Heart right ventricle (tissue), 16 donors: ENCODE measurements at regions of chr6 and their contacts with region 1.

Region 1: DNA sequence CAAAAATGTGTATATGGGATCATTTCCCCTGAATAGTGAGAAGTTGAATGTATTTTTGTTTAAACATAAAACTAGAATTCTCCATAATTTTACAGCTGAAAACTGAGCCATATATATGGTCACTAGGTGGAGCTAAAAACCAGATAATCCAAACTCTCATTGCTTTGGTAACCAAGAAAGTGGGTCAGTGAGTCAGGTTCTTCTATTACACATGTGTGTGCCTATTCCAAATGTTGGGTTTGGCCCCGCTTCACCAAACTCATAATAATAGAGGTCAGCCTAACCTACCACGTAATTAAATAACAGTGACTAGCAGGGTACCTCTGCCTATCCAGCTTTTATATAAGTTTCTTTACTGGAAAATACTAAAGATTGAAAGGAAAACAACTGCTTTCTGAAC is 19.3 kb upstream of the RNGTT start:
- DNase-seq: peak in 1 of 2 donors; percentile 35
- ATAC-seq: peak; percentile 88 to 97 (median 93)
- H3K4me3 ChIP-seq: no peak overlapping the region
- H3K27ac ChIP-seq: no peak overlapping the region
- H3K4me1 ChIP-seq: peaks cover 0 to 12% (median 6%) of the 10 kb centered on the region in 9 donors
- H3K27me3 ChIP-seq: no peaks in the 10 kb centered on the region
- CTCF ChIP-seq: peak; percentile 51 to 87 (median 77)

Region 2: DNA sequence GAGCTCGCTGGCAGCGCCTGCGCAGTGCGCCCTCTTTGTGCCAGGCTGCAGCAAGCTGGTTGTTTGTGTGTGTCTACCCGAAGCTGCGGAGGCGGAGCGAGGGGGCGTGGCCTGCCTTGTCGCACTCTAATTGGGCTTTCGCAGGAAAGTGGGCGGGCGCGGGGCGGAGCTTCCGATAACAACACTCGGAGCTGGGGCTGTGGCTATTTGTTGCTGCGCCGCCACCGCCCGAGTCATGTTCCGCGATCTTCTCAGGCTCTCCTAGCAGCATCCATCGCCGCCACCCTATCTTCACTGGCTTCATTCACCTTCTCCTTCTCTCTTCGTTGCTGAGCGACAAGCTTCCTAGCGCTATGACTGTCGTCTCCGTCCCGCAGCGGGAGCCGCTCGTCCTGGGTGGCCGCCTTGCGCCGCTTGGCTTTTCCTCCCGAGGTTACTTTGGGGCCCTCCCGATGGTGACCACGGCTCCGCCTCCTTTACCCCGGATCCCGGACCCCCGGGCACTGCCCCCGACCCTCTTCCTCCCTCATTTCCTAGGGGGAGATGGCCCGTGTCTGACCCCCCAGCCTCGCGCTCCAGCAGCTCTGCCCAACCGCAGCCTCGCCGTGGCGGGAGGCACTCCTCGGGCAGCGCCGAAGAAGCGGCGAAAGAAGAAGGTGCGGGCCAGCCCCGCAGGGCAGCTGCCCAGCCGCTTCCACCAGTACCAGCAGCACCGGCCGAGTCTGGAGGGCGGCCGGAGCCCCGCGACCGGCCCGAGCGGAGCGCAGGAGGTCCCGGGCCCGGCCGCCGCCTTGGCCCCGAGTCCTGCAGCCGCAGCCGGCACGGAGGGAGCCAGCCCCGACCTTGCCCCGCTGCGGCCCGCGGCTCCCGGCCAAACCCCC is 98.1 kb after region 1 on chr6 and contains the start of gene PNRC1:
- intact Hi-C with region 1: loop called in 7 of 10 experiments (anchors 1 to 10 kb)
- DNase-seq: peak; percentile 100
- ATAC-seq: peak; percentile 88 to 95 (median 92)
- H3K4me3 ChIP-seq: peak within 1 kb of the TSS; percentile 79 to 99 (median 97)
- H3K27ac ChIP-seq: peak within 1 kb of the TSS; percentile 99 to 100 (median 100)
- H3K4me1 ChIP-seq: peaks cover 3 to 41% (median 31%) of the 10 kb centered on the region in 9 donors
- H3K27me3 ChIP-seq: no peaks in the 10 kb centered on the region
- CTCF ChIP-seq: peak in 2 of 9 donors; percentile 12 to 15
- total RNA-seq, gene PNRC1: 137 to 270 (median 228) TPM

Region 3: DNA sequence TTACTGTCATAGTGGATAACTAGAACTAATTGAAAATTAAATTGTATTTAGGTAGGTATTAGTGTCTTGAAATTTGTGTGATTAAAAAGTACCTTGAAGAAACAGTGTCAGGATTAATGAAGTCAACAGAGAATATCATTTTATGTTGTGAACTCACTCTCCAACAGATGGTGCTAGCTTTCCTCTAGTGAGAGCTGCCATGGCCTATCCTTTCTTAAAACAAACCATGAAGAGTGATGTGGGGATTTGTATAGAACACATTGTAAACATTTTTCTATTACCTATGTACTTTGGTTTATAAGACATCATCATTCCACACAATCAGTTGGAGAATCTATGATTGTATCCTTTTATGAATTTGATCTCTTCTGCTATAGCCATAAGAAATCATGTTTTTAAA is 139.9 kb after region 1 on chr6:
- intact Hi-C with region 1: loop called in 5 of 10 experiments (anchors 5 to 10 kb)
- DNase-seq: no peak
- ATAC-seq: peak in 5 of 8 donors; percentile 55 to 72 (median 71)
- H3K4me3 ChIP-seq: no peak overlapping the region
- H3K27ac ChIP-seq: no peak overlapping the region
- H3K4me1 ChIP-seq: peaks cover 0 to 4% (median 0%) of the 10 kb centered on the region in 9 donors
- H3K27me3 ChIP-seq: no peaks in the 10 kb centered on the region
- CTCF ChIP-seq: peak; percentile 21 to 72 (median 55)

Region 4: DNA sequence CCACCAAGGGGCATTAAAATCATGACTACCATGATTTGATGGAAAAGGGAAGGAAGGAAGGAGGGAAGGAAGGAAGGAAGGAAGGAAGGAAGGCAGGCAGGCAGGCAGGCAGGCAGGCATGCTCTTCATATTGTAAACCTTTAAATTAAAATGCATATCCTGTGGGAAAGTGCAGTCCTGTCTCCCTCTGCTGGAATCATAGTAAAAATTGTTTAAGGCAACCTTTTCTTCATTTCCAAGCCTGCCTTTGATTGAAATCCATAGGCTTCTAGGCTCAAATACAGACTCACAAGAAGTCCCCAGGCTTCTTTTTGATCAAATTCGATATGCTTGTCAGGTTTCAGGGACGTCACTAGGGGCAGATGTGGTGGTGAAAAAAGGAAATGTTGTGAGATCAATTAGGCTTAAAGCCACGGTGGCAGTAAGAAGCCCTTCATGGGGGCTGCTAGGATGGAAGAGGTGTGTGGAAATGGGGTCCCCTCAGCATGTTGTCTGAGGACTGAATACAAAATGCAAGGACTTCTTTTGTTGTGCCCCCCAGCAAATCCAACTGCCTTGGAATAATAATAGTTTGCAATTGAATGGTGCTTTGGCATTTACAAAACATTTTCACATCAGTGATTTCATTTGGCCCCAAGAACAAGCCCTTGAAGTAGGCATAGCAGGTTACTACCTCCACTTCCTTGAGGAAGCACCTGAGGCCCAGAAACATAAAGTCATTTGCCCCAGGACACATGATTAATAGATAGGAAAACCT is 260.0 kb after region 1 on chr6:
- intact Hi-C with region 1: loop called (anchors 1 to 5 kb)
- DNase-seq: peak in 1 of 2 donors; percentile 11
- ATAC-seq: peak in 1 of 8 donors; percentile 35
- H3K4me3 ChIP-seq: no peak overlapping the region
- H3K27ac ChIP-seq: no peak overlapping the region
- H3K4me1 ChIP-seq: peaks cover 0 to 8% (median 0%) of the 10 kb centered on the region in 9 donors
- H3K27me3 ChIP-seq: peaks cover 0 to 3% (median 0%) of the 10 kb centered on the region in 7 donors
- CTCF ChIP-seq: peak; percentile 30 to 67 (median 51)

Region 5: DNA sequence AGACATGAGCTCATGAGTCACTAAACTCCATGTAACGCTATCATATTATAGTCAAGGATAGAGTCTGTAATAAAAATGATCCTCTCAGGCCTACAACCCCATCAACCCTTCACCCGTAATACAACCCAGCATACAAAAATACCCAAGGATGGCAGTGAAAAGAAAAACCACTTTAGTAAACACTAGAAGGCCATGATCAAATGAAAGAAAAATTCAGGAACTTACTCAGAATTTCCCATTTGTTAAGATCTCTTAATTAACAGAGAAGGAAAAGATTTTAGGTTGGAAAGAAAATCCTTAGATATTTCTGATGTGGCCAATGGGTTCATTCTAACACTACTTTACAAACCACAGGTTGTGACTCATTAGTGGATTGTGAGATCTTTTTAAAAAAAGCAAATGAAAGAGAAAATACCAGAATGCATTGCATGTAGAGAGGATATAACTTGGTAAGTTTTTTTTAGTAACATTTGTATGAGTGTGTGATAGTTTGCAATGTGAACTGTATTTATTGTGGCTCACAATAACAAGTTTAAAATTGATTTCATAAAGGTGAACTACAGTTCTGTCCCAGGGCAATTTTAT is 377.8 kb after region 1 on chr6:
- intact Hi-C with region 1: loop called in 5 of 10 experiments (anchors 5 to 10 kb)
- DNase-seq: no peak
- ATAC-seq: no peak
- H3K4me3 ChIP-seq: no peak overlapping the region
- H3K27ac ChIP-seq: no peak overlapping the region
- H3K4me1 ChIP-seq: peaks cover 0 to 41% (median 8%) of the 10 kb centered on the region in 9 donors
- H3K27me3 ChIP-seq: no peaks in the 10 kb centered on the region
- CTCF ChIP-seq: no peak